AG04449 (cell line): ENCODE measurements at regions of chr19 and their contacts with region 1.

Region 1: DNA sequence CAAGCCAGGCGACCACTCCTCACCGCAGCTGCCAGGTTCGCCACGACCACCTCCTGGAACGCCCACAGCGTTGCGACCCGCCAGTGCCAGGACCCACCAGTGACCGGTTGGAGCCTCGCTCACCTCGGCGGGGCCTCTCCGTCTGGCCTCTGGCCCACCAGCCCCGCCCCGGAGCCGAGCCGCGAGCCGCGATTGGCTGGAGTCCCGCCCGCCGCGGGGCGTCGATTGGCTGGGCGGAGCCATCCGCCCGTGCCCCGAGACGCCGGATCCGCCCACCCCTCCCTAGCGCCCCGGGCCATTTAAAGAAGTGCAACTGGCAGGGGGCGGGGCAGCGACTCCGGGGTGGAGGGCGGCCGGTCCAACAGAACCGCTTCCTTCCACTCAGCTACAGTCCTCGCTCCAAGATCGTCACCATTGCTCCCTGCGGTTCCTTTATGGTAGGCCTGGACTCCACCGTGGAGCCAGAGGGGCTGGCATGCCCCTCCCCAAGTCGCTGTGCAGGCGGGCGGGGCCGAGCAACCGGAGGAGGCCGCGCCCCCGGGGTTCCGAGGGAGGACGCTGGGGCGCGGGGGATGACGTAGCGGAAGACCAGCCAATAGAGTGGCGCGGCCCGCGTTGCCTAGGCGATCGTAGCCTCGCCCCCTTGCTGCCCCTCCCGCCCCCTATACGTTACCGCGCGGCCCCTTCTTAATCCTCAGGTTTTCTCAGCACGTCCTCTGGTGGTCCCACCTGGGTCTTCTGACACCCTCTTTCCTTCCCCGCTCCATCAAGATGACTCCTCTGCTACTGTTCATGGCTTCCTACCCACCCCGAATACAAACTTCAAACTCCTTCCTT is at the start of gene SERTAD3:
- DNase-seq: peak; percentile 44
- H3K4me3 ChIP-seq: peak within 1 kb of the TSS; percentile 98
- CTCF ChIP-seq: no peak

Region 2: GRCh38 chr19:40433391-40434216 is 10.8 kb before region 1 on chr19:
- CTCF ChIA-PET with region 1: interaction called, 4 read pairs
- POLR2A ChIA-PET with region 1: interaction called, 11 read pairs
- DNase-seq: peak; percentile 34
- H3K4me3 ChIP-seq: peak overlapping the region; percentile 53
- CTCF ChIP-seq: no peak

Region 3: DNA sequence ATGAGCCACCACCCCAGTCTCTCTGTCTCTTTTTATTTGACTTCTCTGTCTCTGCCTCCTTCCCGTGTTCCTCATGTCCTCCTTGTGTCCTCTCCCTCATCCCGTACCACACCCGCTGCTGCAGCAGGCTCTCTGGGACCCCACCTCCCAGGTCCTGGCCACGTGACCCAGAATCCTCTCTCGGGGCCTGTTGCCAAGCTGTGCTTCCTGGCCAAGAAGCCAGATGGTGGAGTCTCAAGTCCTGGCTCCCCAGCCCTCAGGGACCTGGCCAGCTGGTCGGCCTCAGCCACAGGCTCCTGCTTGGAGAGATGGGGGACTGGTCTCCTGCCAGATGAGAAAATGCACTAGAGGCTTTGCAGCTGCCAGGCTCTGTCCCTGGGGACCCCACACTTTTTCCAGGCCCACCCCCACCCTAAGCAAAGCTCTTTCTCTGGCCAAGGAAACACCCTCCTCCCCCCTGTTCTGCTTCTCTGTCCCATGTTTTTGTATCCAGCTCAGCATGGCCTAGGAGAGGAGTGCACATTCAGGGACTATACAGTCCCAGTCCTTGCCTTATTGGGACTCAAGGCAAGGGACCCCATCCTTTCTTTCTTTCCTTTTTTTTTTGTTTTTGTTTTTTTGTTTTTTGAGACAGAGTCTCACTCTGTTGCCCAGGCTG is 97.9 kb after region 1 on chr19:
- CTCF ChIA-PET with region 1: no interaction called
- POLR2A ChIA-PET with region 1: no interaction called
- DNase-seq: no peak
- H3K4me3 ChIP-seq: no peak overlapping the region
- CTCF ChIP-seq: no peak

Region 4: GRCh38 chr19:40687525-40688016 is 243.2 kb after region 1 on chr19:
- CTCF ChIA-PET with region 1: no interaction called
- POLR2A ChIA-PET with region 1: no interaction called
- DNase-seq: no peak
- H3K4me3 ChIP-seq: peak overlapping the region; percentile 97
- CTCF ChIP-seq: no peak